Activated B cell treated with CpG ODN at 0.5 μM for 24 hours (primary cell): ENCODE measurements at regions of chr1 and their contacts with region 1.

Region 1: DNA sequence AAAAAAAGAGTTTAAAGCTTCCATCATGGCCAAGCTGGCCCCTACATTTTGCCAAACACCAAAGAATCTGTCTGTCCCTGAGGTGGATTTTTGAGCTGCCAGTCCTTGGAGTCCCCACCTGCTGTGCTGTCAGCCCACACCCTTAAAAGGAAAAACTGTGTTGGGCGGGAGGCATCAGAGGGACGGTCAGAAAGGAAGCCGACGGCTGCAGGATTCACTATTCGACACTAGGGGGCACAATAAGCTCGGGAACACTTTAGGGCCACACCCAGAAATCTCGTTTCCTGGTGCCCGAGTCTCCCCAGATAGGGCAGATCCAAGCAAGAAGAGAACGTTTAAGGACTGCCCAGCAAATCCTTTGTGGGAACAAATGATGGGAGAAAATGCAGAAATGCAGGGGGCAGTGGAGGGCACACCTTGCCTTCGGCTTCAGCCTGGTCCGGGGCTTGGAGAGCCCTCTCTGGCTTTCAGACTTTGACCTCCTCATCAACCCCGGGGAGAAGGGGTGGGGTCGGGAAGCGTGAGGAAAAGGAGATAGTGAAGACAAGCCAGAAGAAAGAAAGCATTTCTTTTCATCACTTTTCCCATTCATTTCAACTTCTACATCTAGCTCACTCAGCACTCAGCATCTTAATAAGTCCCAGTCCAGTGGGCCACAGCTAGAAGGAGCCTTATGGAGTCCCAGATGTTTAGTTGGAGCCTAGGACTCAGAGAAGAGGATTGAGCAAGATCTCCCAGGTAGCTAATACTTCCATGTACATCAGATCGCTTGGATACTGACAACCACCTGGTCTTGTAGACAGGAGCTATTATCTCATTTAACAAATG is 5.0 kb upstream of the CTTNBP2NL start:
- DNase-seq: peak; percentile 66
- ATAC-seq: peak; percentile 88
- H3K4me3 Mint-ChIP-seq: peak overlapping the region; percentile 66
- H3K27ac Mint-ChIP-seq: peak overlapping the region; percentile 46
- H3K4me1 Mint-ChIP-seq: peaks cover 31% of the 10 kb centered on the region
- H3K27me3 Mint-ChIP-seq: peaks cover 14% of the 10 kb centered on the region
- CTCF ChIP-seq: peak; percentile 89

Region 2: GRCh38 chr1:112466078-112466660 is 75.2 kb after region 1 on chr1:
- CTCF ChIA-PET with region 1: interaction called, 49 read pairs
- POLR2A ChIA-PET with region 1: interaction called, 15 read pairs
- intact Hi-C with region 1: loop called (anchors 1 kb)
- DNase-seq: peak; percentile 81
- ATAC-seq: peak; percentile 93
- H3K4me3 Mint-ChIP-seq: peak overlapping the region; percentile 77
- H3K27ac Mint-ChIP-seq: peak overlapping the region; percentile 88
- H3K4me1 Mint-ChIP-seq: peaks cover 54% of the 10 kb centered on the region
- H3K27me3 Mint-ChIP-seq: peaks cover 16% of the 10 kb centered on the region
- CTCF ChIP-seq: no peak

Region 3: GRCh38 chr1:112614460-112615065 is 223.6 kb after region 1 on chr1:
- CTCF ChIA-PET with region 1: interaction called, 35 read pairs
- POLR2A ChIA-PET with region 1: interaction called, 12 read pairs
- intact Hi-C with region 1: loop called (anchors 1 kb)
- DNase-seq: no peak
- ATAC-seq: no peak
- H3K4me3 Mint-ChIP-seq: no peak overlapping the region
- H3K27ac Mint-ChIP-seq: no peak overlapping the region
- H3K4me1 Mint-ChIP-seq: peaks cover 13% of the 10 kb centered on the region
- H3K27me3 Mint-ChIP-seq: no peaks in the 10 kb centered on the region
- CTCF ChIP-seq: no peak

Region 4: DNA sequence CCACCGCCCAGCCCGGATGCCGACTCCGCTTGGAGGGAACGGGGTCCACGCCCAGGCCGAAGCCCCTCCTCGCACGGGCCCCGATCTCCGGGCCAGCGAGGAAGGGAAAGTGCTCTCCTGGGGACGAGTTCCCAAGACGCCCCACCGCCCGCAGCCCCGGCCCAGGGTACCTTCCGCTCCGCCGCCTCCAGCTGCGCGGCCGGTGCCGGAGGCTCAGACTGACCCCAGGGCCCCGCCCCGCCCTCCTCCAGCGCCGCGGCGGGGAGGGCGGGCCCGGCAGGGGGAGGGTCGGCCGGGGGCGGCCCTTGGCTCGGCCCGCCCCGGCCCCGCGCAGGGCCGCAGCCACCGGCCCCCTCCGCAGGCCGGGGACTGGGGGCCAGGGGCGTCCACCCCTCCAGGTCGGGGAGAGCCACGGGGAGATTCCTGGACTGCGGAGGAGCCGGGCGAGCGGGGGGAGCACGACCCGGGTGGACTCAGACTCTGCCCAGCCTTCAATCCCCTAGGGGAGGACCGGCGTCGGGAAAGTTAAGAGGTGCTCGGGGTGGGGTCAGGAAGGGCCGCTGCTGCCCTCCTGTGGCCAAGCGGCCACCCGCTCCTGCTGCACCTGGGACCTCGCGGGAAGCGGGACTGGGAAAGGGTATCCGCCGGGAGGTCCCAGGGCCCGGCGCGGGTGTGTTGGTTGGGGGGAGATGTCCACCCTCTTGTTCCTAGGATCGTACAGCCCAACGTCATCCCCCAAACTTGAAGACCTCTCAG is 316.1 kb after region 1 on chr1 and contains the start of gene RHOC:
- CTCF ChIA-PET with region 1: interaction called, 48 read pairs
- POLR2A ChIA-PET with region 1: interaction called, 11 read pairs
- intact Hi-C with region 1: loop called (anchors 1 kb)
- DNase-seq: peak; percentile 74
- ATAC-seq: peak; percentile 86
- H3K4me3 Mint-ChIP-seq: peak within 1 kb of the TSS; percentile 82
- H3K27ac Mint-ChIP-seq: no peak within 1 kb of the TSS
- H3K4me1 Mint-ChIP-seq: peaks cover 47% of the 10 kb centered on the region
- H3K27me3 Mint-ChIP-seq: no peaks in the 10 kb centered on the region
- CTCF ChIP-seq: no peak
- total RNA-seq, gene RHOC: 11.5 and 13.5 TPM in 2 replicates

Region 5: DNA sequence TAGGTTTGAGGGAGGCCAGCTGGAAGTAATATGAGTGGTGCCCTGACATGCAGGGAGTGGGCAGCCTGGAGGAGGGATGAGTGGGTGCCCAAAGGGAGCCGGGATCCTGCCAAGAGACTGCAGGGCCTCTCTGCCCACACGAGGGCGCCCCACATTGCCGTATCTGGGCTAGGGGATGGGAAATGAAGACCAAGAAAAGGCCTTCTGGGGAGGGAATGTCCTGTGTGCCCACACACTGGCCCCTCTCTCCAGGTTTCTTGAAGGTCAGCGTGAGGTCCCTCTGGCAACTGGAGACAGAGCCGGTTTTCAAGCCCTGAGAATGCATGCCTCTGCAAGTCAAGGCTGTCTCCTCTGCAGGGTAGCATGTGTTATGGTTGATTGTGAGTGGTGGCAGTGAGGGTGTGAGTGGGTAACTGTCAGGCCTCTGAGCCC is 418.3 kb after region 1 on chr1:
- CTCF ChIA-PET with region 1: interaction called, 7 read pairs
- POLR2A ChIA-PET with region 1: no interaction called
- intact Hi-C with region 1: loop called (anchors 1 kb)
- DNase-seq: peak; percentile 53
- ATAC-seq: peak; percentile 75
- H3K4me3 Mint-ChIP-seq: no peak overlapping the region
- H3K27ac Mint-ChIP-seq: no peak overlapping the region
- H3K4me1 Mint-ChIP-seq: no peaks in the 10 kb centered on the region
- H3K27me3 Mint-ChIP-seq: peaks cover 2% of the 10 kb centered on the region
- CTCF ChIP-seq: peak; percentile 15

Region 6: DNA sequence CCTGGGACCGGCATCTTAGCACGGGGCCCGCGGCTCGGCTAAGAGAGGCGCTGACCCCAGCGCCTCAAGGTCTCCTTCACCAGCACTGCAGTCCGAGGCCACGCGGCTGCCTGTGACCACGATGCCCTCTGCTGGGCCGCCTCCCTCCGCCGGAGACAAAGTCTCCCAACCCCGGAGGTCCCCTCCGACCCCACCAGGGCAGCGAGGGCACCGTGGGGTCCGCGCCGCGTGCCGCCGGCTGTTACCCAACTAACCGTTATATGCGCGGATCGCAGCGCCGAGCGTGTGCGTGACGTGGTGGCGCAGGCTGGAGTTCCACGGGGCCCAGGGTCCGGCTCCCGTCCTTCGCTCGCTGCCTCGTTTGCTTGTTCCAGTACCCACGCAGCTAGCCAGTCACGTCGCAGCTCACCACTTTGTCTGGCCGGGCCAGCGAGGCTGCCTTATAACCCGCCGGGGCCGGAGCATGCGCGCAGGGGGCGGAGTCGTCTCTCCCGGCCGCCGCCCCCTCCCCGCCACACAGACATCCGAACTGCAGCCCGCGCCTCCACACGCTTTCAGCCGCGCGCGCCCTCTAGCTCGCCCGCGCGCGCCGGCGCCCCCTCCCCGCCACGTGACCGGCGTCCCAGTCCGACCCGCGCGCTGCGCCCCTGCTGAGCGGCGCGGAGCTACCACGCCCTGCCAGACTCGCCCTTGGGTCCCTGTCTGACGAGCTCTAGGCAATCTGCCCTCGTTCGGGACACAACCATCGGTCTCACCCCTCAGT is 565.0 kb after region 1 on chr1 and contains the start of gene SLC16A1:
- CTCF ChIA-PET with region 1: no interaction called
- POLR2A ChIA-PET with region 1: no interaction called
- intact Hi-C with region 1: loop called (anchors 5 kb)
- DNase-seq: peak; percentile 89
- ATAC-seq: peak; percentile 82
- H3K4me3 Mint-ChIP-seq: peak within 1 kb of the TSS; percentile 98
- H3K27ac Mint-ChIP-seq: peak within 1 kb of the TSS; percentile 98
- H3K4me1 Mint-ChIP-seq: peaks cover 49% of the 10 kb centered on the region
- H3K27me3 Mint-ChIP-seq: no peaks in the 10 kb centered on the region
- CTCF ChIP-seq: no peak
- total RNA-seq, gene SLC16A1: 17.8 and 17.9 TPM in 2 replicates

Region 7: GRCh38 chr1:113118266-113118665 is 727.3 kb after region 1 on chr1:
- CTCF ChIA-PET with region 1: no interaction called
- POLR2A ChIA-PET with region 1: no interaction called
- intact Hi-C with region 1: no loop called
- DNase-seq: no peak
- ATAC-seq: no peak
- H3K4me3 Mint-ChIP-seq: no peak overlapping the region
- H3K27ac Mint-ChIP-seq: no peak overlapping the region
- H3K4me1 Mint-ChIP-seq: no peaks in the 10 kb centered on the region
- H3K27me3 Mint-ChIP-seq: no peaks in the 10 kb centered on the region
- CTCF ChIP-seq: no peak